Endothelial cell of umbilical vein (primary cell): ENCODE measurements at regions of chr18 and their contacts with region 1.

Region 1: DNA sequence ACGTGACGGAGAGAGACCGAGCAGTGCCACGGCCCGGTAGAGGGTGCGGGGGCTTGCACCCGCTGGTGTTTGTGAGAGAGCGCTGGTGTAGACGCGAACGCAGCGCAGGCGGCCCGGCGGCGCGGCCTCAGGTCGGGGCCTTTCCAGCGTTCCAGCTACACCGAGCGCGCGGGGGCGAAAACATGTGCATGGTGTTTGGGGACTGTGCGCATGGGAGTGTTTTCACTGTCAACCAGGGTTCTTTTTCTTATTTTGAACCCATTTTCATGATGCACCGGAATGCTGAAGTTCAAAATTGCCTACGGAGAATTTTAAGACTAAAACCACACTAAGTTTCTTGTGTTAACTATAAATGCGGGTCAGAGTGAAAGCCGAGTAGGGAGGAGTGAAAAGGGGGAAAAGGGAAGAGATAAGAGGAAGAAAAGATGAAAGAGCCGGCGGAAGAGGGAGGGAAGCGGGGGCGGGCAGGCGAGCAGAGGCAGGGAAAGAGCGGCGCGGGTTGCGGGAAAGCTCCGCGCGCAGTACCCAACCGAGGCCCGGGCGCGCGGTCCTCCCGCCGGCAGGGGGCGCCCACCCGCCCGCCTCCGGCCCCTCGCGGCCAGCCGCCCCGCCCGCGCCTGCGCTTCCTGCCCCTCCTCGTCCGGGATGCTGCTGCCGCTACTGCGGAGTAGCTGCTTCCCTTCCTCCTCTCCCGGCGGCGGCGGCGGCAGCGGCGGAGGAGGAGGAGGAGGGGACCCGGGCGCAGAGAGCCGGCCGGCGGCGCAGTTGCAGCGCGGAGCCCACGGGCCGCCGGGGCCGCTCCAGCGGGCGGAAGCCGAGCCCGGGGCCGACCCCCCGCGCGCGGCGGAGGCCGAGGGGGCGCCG is at the start of gene RAB12:
- DNase-seq: peak; percentile 65
- H3K4me3 ChIP-seq: peak within 1 kb of the TSS; percentile 63 to 98 (median 78)
- H3K27ac ChIP-seq: peak within 1 kb of the TSS; percentile 39
- H3K4me1 ChIP-seq: peaks cover 15% of the 10 kb centered on the region
- H3K27me3 ChIP-seq: peaks cover 4 to 6% of the 10 kb centered on the region in 2 experiments
- CTCF ChIP-seq: peak; percentile 60 to 74
- POLR2A ChIP-seq: peak; percentile 64
- total RNA-seq, gene RAB12: 42.0 and 45.4 TPM in 2 replicates

Region 2: GRCh38 chr18:7677001-7677400 is 932.0 kb before region 1 on chr18:
- CTCF ChIA-PET with region 1: no interaction called
- POLR2A ChIA-PET with region 1: no interaction called
- dilution Hi-C with region 1: no loop called
- intact Hi-C with region 1: loop called (anchors 5 kb)
- DNase-seq: no peak
- H3K4me3 ChIP-seq: no peak overlapping the region
- H3K27ac ChIP-seq: no peak overlapping the region
- H3K4me1 ChIP-seq: peaks cover 7% of the 10 kb centered on the region
- H3K27me3 ChIP-seq: no peaks in the 10 kb centered on the region
- CTCF ChIP-seq: no peak
- POLR2A ChIP-seq: no peak

Region 3: GRCh38 chr18:8627107-8627472 is 18.1 kb after region 1 on chr18:
- CTCF ChIA-PET with region 1: interaction called, 19 read pairs
- POLR2A ChIA-PET with region 1: no interaction called
- dilution Hi-C with region 1: no loop called
- intact Hi-C with region 1: no loop called
- DNase-seq: no peak
- H3K4me3 ChIP-seq: no peak overlapping the region
- H3K27ac ChIP-seq: peak overlapping the region; percentile 10
- H3K4me1 ChIP-seq: peaks cover 12% of the 10 kb centered on the region
- H3K27me3 ChIP-seq: no peaks in the 10 kb centered on the region
- CTCF ChIP-seq: no peak
- POLR2A ChIP-seq: no peak

Region 4: DNA sequence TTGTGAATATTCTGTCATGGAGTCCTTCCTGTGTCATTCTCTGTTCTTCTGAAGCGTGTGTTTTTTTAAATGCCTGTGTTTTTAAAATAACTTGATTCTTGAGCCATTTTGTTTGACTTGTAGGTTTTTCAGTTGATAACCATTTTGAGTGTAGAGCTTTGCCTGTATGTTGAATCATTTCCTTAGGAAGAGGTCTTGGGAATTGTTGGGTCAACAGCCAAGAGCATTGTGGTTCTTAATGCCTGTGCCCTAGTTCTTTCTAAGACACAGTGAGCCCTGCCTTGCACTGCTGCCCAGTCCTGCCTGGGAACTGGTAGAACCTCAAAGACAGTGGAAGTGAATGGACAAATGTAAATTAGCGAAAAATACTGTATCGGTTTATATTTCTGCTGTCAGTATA is 26.1 kb after region 1 on chr18:
- CTCF ChIA-PET with region 1: interaction called, 5 read pairs
- POLR2A ChIA-PET with region 1: no interaction called
- dilution Hi-C with region 1: no loop called
- intact Hi-C with region 1: loop called (anchors 2 kb)
- DNase-seq: peak; percentile 81
- H3K4me3 ChIP-seq: no peak overlapping the region
- H3K27ac ChIP-seq: peak overlapping the region; percentile 50
- H3K4me1 ChIP-seq: peaks cover 17% of the 10 kb centered on the region
- H3K27me3 ChIP-seq: no peaks in the 10 kb centered on the region
- CTCF ChIP-seq: no peak
- POLR2A ChIP-seq: no peak